HCT116 (cell line): ENCODE measurements at regions of chr17 and their contacts with region 1.

Region 1: GRCh38 chr17:2029911-2030778 is at the start of gene DPH1:
- DNase-seq: peak; percentile 85
- ATAC-seq: peak; percentile 87
- H3K4me3 ChIP-seq: peak within 1 kb of the TSS; percentile 100
- H3K27ac ChIP-seq: peak within 1 kb of the TSS; percentile 58
- H3K4me1 ChIP-seq: peaks cover 16 to 23% of the 10 kb centered on the region in 2 experiments; a peak in 3 of 4 replicates
- H3K27me3 ChIP-seq: no peaks in the 10 kb centered on the region
- CTCF ChIP-seq: no peak
- POLR2A ChIP-seq: peak; percentile 54
- RAD21 ChIP-seq: peak; percentile 71
- total RNA-seq, gene DPH1: 47.2 TPM

Region 2: GRCh38 chr17:1908699-1909309 is 121.3 kb before region 1 on chr17:
- CTCF ChIA-PET with region 1: interaction called, 76 read pairs
- POLR2A ChIA-PET with region 1: interaction called, 5 read pairs
- RAD21 ChIA-PET with region 1: interaction called, 14 to 16 read pairs
- intact Hi-C with region 1: loop called (anchors 1 kb)
- DNase-seq: peak; percentile 50
- ATAC-seq: peak; percentile 95
- H3K4me3 ChIP-seq: no peak overlapping the region
- H3K27ac ChIP-seq: no peak overlapping the region
- H3K4me1 ChIP-seq: no peaks in the 10 kb centered on the region; a peak in 1 of 4 replicates
- H3K27me3 ChIP-seq: peaks cover 27% of the 10 kb centered on the region
- CTCF ChIP-seq: peak; percentile 73 to 90 (median 73)
- POLR2A ChIP-seq: no peak
- RAD21 ChIP-seq: peak; percentile 92

Region 3: GRCh38 chr17:2041561-2042366 is 11.6 kb after region 1 on chr17 and contains the start of gene OVCA2:
- CTCF ChIA-PET with region 1: interaction called, 3 read pairs
- POLR2A ChIA-PET with region 1: interaction called, 4 read pairs
- RAD21 ChIA-PET with region 1: no interaction called
- intact Hi-C with region 1: loop called (anchors 1 kb)
- DNase-seq: peak; percentile 90
- ATAC-seq: peak; percentile 86
- H3K4me3 ChIP-seq: peak within 1 kb of the TSS; percentile 94 to 96
- H3K27ac ChIP-seq: peak within 1 kb of the TSS; percentile 83
- H3K4me1 ChIP-seq: peaks cover 17 to 36% of the 10 kb centered on the region in 2 experiments
- H3K27me3 ChIP-seq: no peaks in the 10 kb centered on the region
- CTCF ChIP-seq: peak; percentile 8 to 49 (median 30); a peak in 3 of 6 replicates
- POLR2A ChIP-seq: peak; percentile 26
- RAD21 ChIP-seq: peak; percentile 56
- total RNA-seq, gene OVCA2: 27.3 TPM

Region 4: GRCh38 chr17:2828397-2829038 is 798.4 kb after region 1 on chr17:
- CTCF ChIA-PET with region 1: no interaction called
- POLR2A ChIA-PET with region 1: no interaction called
- RAD21 ChIA-PET with region 1: no interaction called
- intact Hi-C with region 1: no loop called
- DNase-seq: peak; percentile 43
- ATAC-seq: peak; percentile 95
- H3K4me3 ChIP-seq: no peak overlapping the region
- H3K27ac ChIP-seq: no peak overlapping the region
- H3K4me1 ChIP-seq: peaks cover 0 to 3% of the 10 kb centered on the region in 2 experiments; a peak in 3 of 4 replicates
- H3K27me3 ChIP-seq: no peaks in the 10 kb centered on the region
- CTCF ChIP-seq: peak; percentile 82 to 93 (median 90)
- POLR2A ChIP-seq: no peak
- RAD21 ChIP-seq: peak; percentile 96